GM12878 (cell line): ENCODE measurements at regions of chr1 and their contacts with region 1.

Region 1: DNA sequence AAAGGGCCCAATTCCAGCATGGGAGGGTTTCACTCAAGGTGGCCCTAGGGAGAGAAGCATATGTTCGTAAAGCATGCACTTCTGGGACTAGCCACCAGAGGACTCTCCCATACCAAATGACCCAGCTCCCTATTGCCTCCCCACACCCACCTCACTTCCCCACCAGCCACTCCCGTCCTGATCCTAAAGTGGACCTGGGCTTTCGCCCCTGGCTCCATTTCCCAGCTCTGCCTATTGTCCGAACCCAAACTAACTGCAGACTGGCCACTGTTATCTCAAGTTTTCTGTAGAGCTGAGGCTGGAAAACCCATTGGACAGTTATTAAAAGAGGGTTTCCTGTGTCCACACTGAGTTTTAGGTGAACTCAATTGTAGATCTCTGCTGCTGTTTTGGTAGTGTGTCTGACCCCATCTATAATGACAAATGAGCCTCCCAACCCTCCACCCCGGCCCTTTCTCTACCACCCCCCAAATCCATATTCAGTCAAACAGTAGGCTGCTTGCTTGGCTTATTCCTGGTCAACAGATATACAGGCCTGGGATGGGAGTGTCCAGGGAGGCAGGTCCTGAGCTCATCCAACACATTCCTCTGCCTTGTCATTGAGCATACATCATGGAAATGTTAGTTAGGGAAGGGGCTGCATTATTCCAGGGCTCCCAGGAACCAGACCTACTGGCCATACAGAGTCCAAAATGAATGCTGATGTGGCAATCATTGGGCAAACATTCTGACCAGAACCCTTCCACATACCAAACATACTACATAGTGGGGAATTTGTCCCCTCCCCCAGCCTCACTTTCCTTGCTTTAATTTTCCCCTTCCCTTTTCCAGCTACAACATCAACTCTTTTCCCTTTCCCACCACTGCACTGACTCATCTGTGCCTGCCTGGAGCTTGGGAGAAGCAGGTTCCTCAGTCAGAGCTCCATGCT is 59.2 kb downstream of the ABCA4 start:
- DNase-seq: no peak
- ATAC-seq: peak; percentile 95
- H3K4me3 ChIP-seq: no peak overlapping the region
- H3K27ac ChIP-seq: no peak overlapping the region
- H3K4me1 ChIP-seq: no peaks in the 10 kb centered on the region
- H3K27me3 ChIP-seq: no peaks in the 10 kb centered on the region; a peak in 1 of 4 replicates
- CTCF ChIP-seq: peak; percentile 84 to 89 (median 86)
- EP300 ChIP-seq: no peak
- POLR2A ChIP-seq: no peak
- RAD21 ChIP-seq: peak; percentile 73

Region 2: DNA sequence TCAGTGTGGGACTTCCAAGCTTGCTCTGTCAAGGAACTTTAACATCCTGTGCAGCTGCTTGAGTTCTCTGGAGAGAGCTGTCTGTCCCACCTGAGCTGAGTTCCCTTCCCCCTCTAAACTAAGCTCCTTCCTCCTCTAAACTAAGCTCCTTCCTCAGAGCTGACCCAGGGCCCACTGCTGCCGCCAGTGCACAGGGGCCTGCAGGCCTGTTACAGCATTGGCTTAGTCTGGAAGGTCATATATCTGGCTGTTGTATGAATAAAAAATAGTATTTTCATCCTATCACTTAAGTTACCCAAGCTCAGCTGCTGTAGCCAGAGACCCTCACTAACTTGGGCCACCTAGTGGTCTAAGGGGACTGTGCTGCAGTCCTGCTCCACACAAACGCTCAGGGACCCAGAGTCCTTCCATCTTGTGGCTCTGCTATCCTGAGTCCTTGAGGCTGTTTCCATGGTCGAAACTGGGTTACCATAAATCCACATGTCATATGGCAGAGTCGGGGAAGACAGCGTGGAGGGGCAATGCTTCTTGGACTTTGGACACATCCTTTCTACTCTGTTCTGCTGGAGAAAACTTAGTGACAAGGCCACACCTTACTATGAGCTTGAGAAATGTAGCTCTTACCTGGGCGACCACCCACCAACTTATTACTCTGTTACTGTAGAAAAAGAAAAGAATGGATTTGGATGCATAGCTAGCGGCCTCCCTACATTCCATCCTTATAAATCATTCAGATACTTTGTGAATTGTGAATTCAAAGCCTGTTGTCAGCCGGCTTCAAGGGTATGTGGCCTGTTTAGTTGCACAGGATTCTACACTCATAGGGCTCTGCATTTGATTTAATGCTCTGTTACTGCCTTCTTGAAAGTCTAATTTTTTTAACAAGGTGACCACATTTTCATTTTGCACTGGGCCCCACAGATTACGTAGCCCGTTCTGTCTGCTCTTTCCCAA is 81.2 kb before region 1 on chr1:
- CTCF ChIA-PET with region 1: no interaction called
- POLR2A ChIA-PET with region 1: no interaction called
- RAD21 ChIA-PET with region 1: no interaction called
- SMC1A ChIA-PET with region 1: no interaction called
- in situ Hi-C with region 1: no loop called
- intact Hi-C with region 1: no loop called
- DNase-seq: no peak
- ATAC-seq: peak; percentile 85
- H3K4me3 ChIP-seq: no peak overlapping the region
- H3K27ac ChIP-seq: no peak overlapping the region
- H3K4me1 ChIP-seq: no peaks in the 10 kb centered on the region
- H3K27me3 ChIP-seq: no peaks in the 10 kb centered on the region
- CTCF ChIP-seq: peak; percentile 27 to 34 (median 28); a peak in 3 of 6 replicates
- EP300 ChIP-seq: no peak
- POLR2A ChIP-seq: no peak
- RAD21 ChIP-seq: peak; percentile 26; the same call in 1 of the 2 replicates

Region 3: GRCh38 chr1:94045465-94046056 is 16.2 kb before region 1 on chr1:
- CTCF ChIA-PET with region 1: interaction called, 22 read pairs
- POLR2A ChIA-PET with region 1: no interaction called
- RAD21 ChIA-PET with region 1: interaction called, 3 read pairs
- SMC1A ChIA-PET with region 1: interaction called, 10 read pairs
- in situ Hi-C with region 1: no loop called
- intact Hi-C with region 1: no loop called
- DNase-seq: no peak
- ATAC-seq: peak; percentile 73
- H3K4me3 ChIP-seq: no peak overlapping the region
- H3K27ac ChIP-seq: no peak overlapping the region
- H3K4me1 ChIP-seq: no peaks in the 10 kb centered on the region
- H3K27me3 ChIP-seq: no peaks in the 10 kb centered on the region; a peak in 1 of 4 replicates
- CTCF ChIP-seq: peak; percentile 33 to 65 (median 45)
- EP300 ChIP-seq: no peak
- POLR2A ChIP-seq: no peak
- RAD21 ChIP-seq: peak; percentile 45

Region 4: DNA sequence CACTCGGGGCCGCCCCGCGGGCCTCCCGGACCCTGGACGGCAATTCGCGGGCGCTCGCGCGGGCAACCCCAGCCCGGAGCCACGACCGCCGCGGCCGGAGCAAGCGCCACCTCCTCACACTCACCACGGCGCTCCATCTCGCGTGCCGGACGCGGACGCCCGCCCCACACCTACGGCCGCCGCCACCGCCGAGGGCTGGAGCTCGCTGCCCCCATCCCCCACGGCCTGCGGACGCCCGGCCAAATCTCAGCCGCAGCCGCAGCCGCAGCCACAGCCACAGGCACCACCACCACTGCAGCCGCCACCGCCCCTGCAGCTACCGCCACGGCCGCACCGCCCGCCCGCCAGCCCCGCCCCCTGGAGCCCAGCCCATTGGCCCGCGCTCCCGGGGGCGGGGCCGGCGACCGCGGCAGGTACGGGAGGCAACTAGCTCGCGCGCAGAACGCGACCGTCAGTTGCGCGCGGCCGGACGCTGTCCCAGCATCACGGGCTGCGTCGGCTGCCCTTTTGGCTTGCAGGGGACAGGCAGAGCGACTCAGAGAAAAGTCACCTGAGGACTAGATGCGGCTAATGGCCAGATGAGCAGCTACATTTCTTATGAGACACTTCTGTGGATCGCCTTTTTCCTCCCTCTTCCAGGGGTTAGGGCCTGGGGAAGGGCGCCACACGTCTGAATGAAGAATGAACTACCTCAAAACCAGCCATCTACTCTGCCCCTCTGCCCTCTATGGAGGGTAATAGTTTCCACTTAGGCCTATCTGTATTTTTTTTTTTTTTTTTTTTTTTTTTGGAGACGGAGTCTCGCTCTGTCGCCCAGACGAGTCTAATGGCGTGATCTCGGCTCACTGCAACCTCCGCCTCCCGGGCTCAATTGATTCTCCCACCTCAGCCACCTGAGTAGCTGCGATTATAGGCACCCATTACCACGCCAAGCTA is 175.8 kb after region 1 on chr1 and contains the start of gene ARHGAP29:
- CTCF ChIA-PET with region 1: interaction called, 3 read pairs
- POLR2A ChIA-PET with region 1: no interaction called
- RAD21 ChIA-PET with region 1: interaction called, 4 read pairs
- SMC1A ChIA-PET with region 1: no interaction called
- in situ Hi-C with region 1: no loop called
- intact Hi-C with region 1: loop called (anchors 10 kb)
- DNase-seq: no peak
- ATAC-seq: peak; percentile 93
- H3K4me3 ChIP-seq: peak within 1 kb of the TSS; percentile 26; the same call in 1 of the 2 replicates
- H3K27ac ChIP-seq: no peak within 1 kb of the TSS
- H3K4me1 ChIP-seq: no peaks in the 10 kb centered on the region
- H3K27me3 ChIP-seq: peaks cover 2 to 21% of the 10 kb centered on the region in 2 experiments; a peak in 2 of 4 replicates
- CTCF ChIP-seq: no peak
- EP300 ChIP-seq: no peak
- POLR2A ChIP-seq: no peak
- RAD21 ChIP-seq: no peak
- polyA plus RNA-seq, gene ARHGAP29: 0.02 TPM in 1 of 2 experiments, not detected in the other

Region 5: GRCh38 chr1:94463765-94464330 is 402.1 kb after region 1 on chr1:
- CTCF ChIA-PET with region 1: interaction called, 54 read pairs
- POLR2A ChIA-PET with region 1: no interaction called
- RAD21 ChIA-PET with region 1: interaction called, 16 read pairs
- SMC1A ChIA-PET with region 1: interaction called, 17 read pairs
- in situ Hi-C with region 1: loop called (anchors 5 kb)
- intact Hi-C with region 1: loop called (anchors 1 kb)
- DNase-seq: no peak
- ATAC-seq: peak; percentile 68
- H3K4me3 ChIP-seq: no peak overlapping the region
- H3K27ac ChIP-seq: no peak overlapping the region
- H3K4me1 ChIP-seq: no peaks in the 10 kb centered on the region
- H3K27me3 ChIP-seq: no peaks in the 10 kb centered on the region
- CTCF ChIP-seq: peak; percentile 21 to 64 (median 49); a peak in 5 of 6 replicates
- EP300 ChIP-seq: no peak
- POLR2A ChIP-seq: no peak
- RAD21 ChIP-seq: peak; percentile 78